ENCODE measurements at regions of chr3 and their contacts with region 1.

Region 1: GRCh38 chr3:112519424-112520001 is 20.2 kb upstream of the BTLA start:
- DNase-seq: peak in 1 of 2 donors; percentile 55
- ATAC-seq: peak in 7 of 8 donors; percentile 76 to 86 (median 81)
- H3K4me3 ChIP-seq: no peak overlapping the region
- H3K27ac ChIP-seq: no peak overlapping the region
- H3K4me1 ChIP-seq: no peaks in the 10 kb centered on the region
- H3K27me3 ChIP-seq: no peaks in the 10 kb centered on the region
- CTCF ChIP-seq: peak; percentile 28 to 89 (median 76)

Region 2: DNA sequence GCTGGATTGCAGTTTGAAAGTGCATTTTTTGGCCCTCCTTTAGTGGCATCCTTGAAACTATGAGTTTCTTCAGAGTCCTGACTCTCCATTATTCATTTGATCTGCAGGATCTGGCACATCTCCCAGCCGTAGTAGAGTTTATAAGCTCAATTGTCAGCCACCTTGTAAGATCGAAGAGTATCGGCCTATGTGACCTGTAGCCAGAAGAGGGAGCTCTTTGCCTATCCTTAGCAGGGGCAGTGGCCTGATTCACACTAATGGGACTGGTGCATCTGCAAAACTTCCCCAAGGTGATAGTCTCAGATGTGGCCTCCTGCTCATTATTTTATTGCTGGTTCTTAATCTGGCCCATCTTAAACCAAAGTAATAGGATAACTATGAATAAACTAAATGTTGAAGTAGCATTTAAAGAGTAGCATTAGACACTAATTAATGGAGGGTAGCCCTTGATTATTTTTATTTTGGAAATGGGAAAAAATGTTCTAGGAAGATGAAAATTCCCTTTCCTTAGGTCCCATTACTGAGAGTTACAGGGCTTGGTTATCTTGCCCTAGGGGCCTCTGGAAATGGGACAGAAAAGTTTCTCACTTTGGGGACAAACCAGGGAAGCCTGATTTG is 407.6 kb before region 1 on chr3:
- intact Hi-C with region 1: loop called in 5 of 10 experiments (anchors 5 to 10 kb)
- DNase-seq: peak in 1 of 2 donors; percentile 54
- ATAC-seq: peak in 7 of 8 donors; percentile 54 to 80 (median 76)
- H3K4me3 ChIP-seq: no peak overlapping the region
- H3K27ac ChIP-seq: no peak overlapping the region
- H3K4me1 ChIP-seq: peaks cover 0 to 17% (median 9%) of the 10 kb centered on the region in 9 donors
- H3K27me3 ChIP-seq: no peaks in the 10 kb centered on the region
- CTCF ChIP-seq: peak; percentile 37 to 88 (median 78)

Region 3: GRCh38 chr3:112136959-112137693 is 382.4 kb before region 1 on chr3:
- intact Hi-C with region 1: loop called in 3 of 10 experiments (anchors 5 to 10 kb)
- DNase-seq: no peak
- ATAC-seq: peak in 6 of 8 donors; percentile 35 to 57 (median 42)
- H3K4me3 ChIP-seq: no peak overlapping the region
- H3K27ac ChIP-seq: no peak overlapping the region
- H3K4me1 ChIP-seq: peaks cover 0 to 41% (median 0%) of the 10 kb centered on the region in 9 donors
- H3K27me3 ChIP-seq: no peaks in the 10 kb centered on the region
- CTCF ChIP-seq: peak; percentile 5 to 63 (median 56)

Region 4: GRCh38 chr3:112293368-112294321 is 225.9 kb before region 1 on chr3 and contains the start of gene SLC9C1:
- intact Hi-C with region 1: loop called in 8 of 10 experiments (anchors 1 to 10 kb)
- DNase-seq: peak in 1 of 2 donors; percentile 72
- ATAC-seq: peak; percentile 71 to 95 (median 86)
- H3K4me3 ChIP-seq: peak within 1 kb of the TSS; percentile 18 to 59 (median 50)
- H3K27ac ChIP-seq: peak within 1 kb of the TSS; percentile 15 to 83 (median 64)
- H3K4me1 ChIP-seq: peaks cover 0 to 23% (median 4%) of the 10 kb centered on the region in 9 donors
- H3K27me3 ChIP-seq: no peaks in the 10 kb centered on the region
- CTCF ChIP-seq: peak; percentile 32 to 79 (median 64)
- total RNA-seq, gene SLC9C1: 0.80 to 2.2 (median 1.6) TPM

Region 5: DNA sequence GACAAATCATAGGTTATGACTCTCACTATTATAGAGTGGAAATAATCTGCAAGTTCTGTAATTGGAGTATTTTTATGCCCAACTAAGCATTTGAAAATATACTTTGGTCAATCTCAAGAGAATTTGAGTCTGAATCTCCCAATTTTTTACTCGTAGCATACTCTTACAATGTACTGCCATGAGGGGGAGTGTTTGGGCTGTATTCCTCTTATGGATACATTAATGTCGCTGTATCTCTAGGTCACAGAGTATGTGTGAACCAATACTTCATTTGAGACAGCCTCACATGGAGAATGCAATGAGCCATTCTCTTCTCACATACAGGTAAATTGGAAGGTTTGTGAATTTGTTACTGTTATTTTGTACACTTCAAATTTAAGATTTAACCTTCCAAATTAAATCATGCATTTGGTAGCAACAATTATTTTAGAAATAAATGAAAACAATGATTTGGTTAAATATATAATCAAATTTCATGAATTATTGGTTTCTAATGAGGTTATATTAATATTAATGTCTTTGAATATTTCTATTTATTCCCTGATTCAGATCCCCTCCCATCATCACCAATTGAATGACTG is 192.1 kb before region 1 on chr3:
- intact Hi-C with region 1: loop called in 9 of 10 experiments (anchors 2 to 10 kb)
- DNase-seq: peak in 1 of 2 donors; percentile 27
- ATAC-seq: peak in 7 of 8 donors; percentile 65 to 84 (median 71)
- H3K4me3 ChIP-seq: no peak overlapping the region
- H3K27ac ChIP-seq: no peak overlapping the region
- H3K4me1 ChIP-seq: peaks cover 0 to 3% (median 0%) of the 10 kb centered on the region in 9 donors
- H3K27me3 ChIP-seq: peaks cover 0 to 6% (median 2%) of the 10 kb centered on the region in 7 donors
- CTCF ChIP-seq: peak; percentile 14 to 74 (median 61)

Region 6: DNA sequence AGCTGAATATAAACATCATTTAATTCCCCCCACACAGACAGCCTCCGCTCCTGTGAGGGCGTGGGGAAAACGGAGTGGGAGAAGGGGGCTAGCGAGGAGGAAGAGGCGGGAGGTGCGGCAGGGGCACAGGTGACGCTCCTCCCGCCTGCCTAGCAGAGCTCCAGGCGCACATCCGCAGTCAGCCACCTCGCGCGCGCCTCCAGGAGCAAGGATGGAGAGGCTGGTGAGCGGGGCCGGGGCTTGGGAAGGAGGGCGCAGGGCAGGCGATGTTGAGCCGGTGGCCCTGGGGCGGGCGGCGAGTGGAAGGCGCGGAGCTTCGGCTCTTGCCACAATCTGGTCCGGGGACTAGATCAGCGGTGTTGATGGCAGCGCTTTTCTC is 186.5 kb before region 1 on chr3 and contains the start of gene CD200:
- intact Hi-C with region 1: loop called in 6 of 10 experiments (anchors 5 to 10 kb)
- DNase-seq: peak; percentile 29 to 46
- ATAC-seq: peak; percentile 67 to 89 (median 84)
- H3K4me3 ChIP-seq: peak within 1 kb of the TSS in 9 of 10 donors; percentile 38 to 64 (median 57)
- H3K27ac ChIP-seq: peak within 1 kb of the TSS in 8 of 10 donors; percentile 48 to 83 (median 72)
- H3K4me1 ChIP-seq: peaks cover 0 to 22% (median 7%) of the 10 kb centered on the region in 9 donors
- H3K27me3 ChIP-seq: peaks cover 0 to 15% (median 6%) of the 10 kb centered on the region in 7 donors
- CTCF ChIP-seq: no peak
- total RNA-seq, gene CD200: 0.82 to 3.3 (median 1.5) TPM

Region 7: GRCh38 chr3:112498914-112499711 is 20.4 kb before region 1 on chr3 and contains the start of gene BTLA:
- intact Hi-C with region 1: no loop called
- DNase-seq: no peak
- ATAC-seq: no peak
- H3K4me3 ChIP-seq: peak within 1 kb of the TSS in 1 of 10 donors; percentile 38
- H3K27ac ChIP-seq: peak within 1 kb of the TSS in 1 of 10 donors; percentile 24
- H3K4me1 ChIP-seq: no peaks in the 10 kb centered on the region
- H3K27me3 ChIP-seq: no peaks in the 10 kb centered on the region
- CTCF ChIP-seq: no peak
- total RNA-seq, gene BTLA: 0.07 to 0.97 (median 0.18) TPM in 4 of 10 donors, not detected in the others